Aorta (tissue), 5 donors: ENCODE measurements at regions of chr14 and their contacts with region 1.

Region 1: DNA sequence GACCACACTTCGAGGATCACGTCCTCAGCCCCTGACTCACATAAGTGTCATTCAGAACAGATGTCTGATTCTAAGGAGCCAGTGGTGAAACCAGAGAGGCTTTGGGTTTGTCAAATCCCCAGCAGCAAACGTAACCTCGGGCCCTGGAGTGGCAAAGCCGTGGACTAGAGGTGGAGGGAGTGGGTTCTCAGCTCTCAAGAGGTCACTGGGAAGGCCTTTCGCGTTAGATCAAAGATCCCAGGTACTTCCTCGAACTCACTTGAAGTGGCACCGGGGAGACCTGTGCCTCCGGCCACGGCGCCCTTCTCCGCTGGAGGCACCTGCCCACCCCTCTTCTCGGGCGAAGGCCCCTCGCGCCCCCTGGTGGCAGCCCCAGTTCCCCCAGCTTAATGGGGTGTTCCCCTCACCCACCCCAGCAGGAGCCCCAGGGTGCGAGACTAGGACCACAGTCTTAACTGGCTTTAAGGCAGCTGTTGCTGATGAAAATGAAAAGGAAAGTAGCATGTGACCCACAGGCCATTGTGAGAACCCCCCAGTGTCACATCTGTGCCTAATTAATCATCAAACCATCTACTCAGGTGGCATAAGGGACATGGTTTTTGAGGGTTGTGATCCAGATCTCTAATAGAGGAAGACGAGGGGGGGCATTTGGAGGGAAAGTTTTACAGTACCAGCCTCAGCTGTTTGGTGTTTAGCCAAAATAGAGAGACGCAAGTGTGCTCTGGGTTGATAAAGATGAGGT is 672 bp upstream of the ESR2 start:
- DNase-seq: peak; percentile 65 to 89
- ATAC-seq: peak; percentile 77
- H3K4me3 ChIP-seq: no peak overlapping the region
- H3K27ac ChIP-seq: no peak overlapping the region
- H3K4me1 ChIP-seq: no peaks in the 10 kb centered on the region
- H3K27me3 ChIP-seq: peaks cover 0 to 1% of the 10 kb centered on the region in 2 donors

Region 2: GRCh38 chr14:63795532-63795931 is 499.3 kb before region 1 on chr14:
- intact Hi-C with region 1: loop called (anchors 5 kb)
- DNase-seq: no peak
- ATAC-seq: no peak
- H3K4me3 ChIP-seq: no peak overlapping the region
- H3K27ac ChIP-seq: no peak overlapping the region
- H3K4me1 ChIP-seq: no peaks in the 10 kb centered on the region
- H3K27me3 ChIP-seq: no peaks in the 10 kb centered on the region

Region 3: DNA sequence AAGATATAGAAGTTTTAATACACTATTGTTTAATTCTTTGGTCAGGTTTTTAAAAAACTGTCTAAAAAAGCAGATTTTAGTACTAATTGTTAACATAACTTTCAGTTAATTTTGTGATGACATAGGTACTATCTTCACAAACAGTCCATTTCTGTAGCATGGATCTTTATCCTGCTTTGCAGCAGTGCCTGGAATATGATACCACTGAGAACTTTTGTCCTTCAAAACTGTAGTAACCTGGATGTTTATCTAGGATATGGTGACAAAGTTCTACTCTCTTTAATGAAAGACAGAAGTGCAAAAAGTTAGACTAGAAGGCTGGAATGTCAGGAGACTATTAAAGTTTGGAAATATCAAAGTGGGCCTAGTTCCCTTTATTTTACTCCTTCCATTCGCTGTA is 282.1 kb before region 1 on chr14:
- intact Hi-C with region 1: loop called (anchors 10 kb)
- DNase-seq: no peak
- ATAC-seq: no peak
- H3K4me3 ChIP-seq: no peak overlapping the region
- H3K27ac ChIP-seq: no peak overlapping the region
- H3K4me1 ChIP-seq: peaks cover 0 to 3% of the 10 kb centered on the region in 2 donors
- H3K27me3 ChIP-seq: no peaks in the 10 kb centered on the region

Region 4: DNA sequence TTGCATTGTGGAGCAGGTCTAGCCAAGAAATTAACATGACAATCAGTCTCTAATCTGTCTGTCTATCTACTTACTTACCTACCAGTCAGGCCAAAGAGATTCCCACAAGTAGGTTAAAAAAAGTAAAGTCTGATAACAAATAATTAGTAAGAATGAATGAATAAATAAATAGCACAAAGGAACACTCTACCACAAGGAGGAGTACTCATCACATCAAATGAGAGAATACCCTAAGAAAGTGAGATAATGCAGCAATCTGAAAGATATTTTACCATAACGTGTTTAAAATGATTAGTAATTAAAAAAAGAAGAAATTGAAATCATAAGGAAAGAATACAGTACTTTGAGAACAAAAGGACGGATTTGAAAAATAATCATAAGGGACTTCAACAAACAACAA is 254.8 kb before region 1 on chr14:
- intact Hi-C with region 1: loop called in 1 of 2 experiments (anchors 10 kb)
- DNase-seq: no peak
- ATAC-seq: no peak
- H3K4me3 ChIP-seq: no peak overlapping the region
- H3K27ac ChIP-seq: no peak overlapping the region
- H3K4me1 ChIP-seq: peaks cover 0 to 3% of the 10 kb centered on the region in 2 donors
- H3K27me3 ChIP-seq: no peaks in the 10 kb centered on the region

Region 5: DNA sequence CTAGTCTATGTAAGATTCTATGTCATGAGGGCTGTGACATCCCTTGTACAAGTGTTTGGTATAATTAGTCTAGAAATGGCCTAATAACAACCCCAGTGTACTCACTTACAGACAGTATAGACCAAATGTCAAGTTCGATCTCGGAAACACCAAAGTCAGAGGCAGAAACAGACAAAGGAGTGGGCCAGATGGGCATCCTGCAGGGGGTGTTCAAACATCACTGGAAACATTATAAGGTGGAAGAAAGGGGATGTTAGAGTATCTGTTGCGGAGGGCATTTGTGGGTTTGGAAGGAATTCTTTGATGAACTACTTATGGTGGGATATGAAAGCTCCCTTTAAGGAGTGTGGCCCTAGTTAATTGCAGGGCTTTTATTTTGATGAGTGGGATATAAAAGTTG is 135.3 kb before region 1 on chr14:
- intact Hi-C with region 1: loop called in 1 of 2 experiments (anchors 10 kb)
- DNase-seq: no peak
- ATAC-seq: no peak
- H3K4me3 ChIP-seq: no peak overlapping the region
- H3K27ac ChIP-seq: no peak overlapping the region
- H3K4me1 ChIP-seq: no peaks in the 10 kb centered on the region
- H3K27me3 ChIP-seq: no peaks in the 10 kb centered on the region